ENCODE measurements at regions of chr19 and their contacts with region 1.

Region 1: DNA sequence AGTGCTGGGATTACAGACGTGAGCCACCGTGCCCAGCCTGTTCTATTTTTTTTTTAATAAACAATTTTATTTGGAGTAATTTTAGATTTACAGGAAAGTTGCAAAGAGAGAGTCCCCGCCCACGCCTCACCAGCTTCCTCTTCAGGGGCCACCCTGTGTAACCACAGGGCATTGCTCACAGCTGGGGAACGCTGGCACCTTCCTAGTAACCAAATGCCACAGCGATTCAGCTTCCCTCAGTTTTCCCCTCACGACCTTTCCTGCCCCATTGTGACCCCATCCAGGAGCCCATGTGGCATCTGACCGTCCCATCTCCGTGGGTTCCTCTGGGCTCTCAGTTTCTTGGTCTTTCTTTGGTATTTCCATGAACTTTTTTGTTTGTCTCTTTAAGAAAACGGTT is 83.9 kb downstream of the GNG7 start:
- DNase-seq: peak; percentile 93
- H3K4me3 Mint-ChIP-seq: peak overlapping the region; percentile 38
- H3K27ac Mint-ChIP-seq: peak overlapping the region; percentile 91
- H3K4me1 Mint-ChIP-seq: peaks cover 62% of the 10 kb centered on the region
- H3K27me3 Mint-ChIP-seq: peaks cover 1% of the 10 kb centered on the region

Region 2: GRCh38 chr19:2455851-2456570 is 162.6 kb before region 1 on chr19:
- CTCF ChIA-PET with region 1: interaction called, 6 read pairs
- POLR2A ChIA-PET with region 1: interaction called, 10 read pairs
- intact Hi-C with region 1: no loop called
- DNase-seq: peak; percentile 62
- H3K4me3 Mint-ChIP-seq: peak overlapping the region; percentile 83
- H3K27ac Mint-ChIP-seq: peak overlapping the region; percentile 82
- H3K4me1 Mint-ChIP-seq: peaks cover 18% of the 10 kb centered on the region
- H3K27me3 Mint-ChIP-seq: no peaks in the 10 kb centered on the region

Region 3: DNA sequence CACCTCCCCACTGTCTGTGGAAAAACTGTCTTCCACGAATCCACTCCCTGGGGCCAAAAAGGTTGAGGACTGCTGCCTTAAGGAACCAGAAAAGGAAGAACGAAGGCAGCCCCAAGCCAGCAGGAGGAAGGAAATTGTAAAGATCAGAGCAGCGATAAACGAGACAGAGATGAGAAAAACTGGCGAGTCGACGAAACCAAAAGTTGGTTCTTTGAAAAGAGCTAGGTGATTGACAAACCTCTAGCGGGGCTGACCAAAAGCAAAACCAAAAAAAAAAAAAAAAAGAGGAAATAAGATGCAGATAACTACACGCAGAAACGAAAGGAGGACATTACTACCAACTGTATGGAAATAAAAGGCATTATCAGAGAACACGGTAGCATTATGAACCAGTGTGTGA is 65.8 kb before region 1 on chr19:
- CTCF ChIA-PET with region 1: interaction called, 4 read pairs
- POLR2A ChIA-PET with region 1: interaction called, 11 read pairs
- intact Hi-C with region 1: no loop called
- DNase-seq: peak; percentile 69
- H3K4me3 Mint-ChIP-seq: peak overlapping the region; percentile 59
- H3K27ac Mint-ChIP-seq: peak overlapping the region; percentile 72
- H3K4me1 Mint-ChIP-seq: peaks cover 19% of the 10 kb centered on the region
- H3K27me3 Mint-ChIP-seq: no peaks in the 10 kb centered on the region

Region 4: DNA sequence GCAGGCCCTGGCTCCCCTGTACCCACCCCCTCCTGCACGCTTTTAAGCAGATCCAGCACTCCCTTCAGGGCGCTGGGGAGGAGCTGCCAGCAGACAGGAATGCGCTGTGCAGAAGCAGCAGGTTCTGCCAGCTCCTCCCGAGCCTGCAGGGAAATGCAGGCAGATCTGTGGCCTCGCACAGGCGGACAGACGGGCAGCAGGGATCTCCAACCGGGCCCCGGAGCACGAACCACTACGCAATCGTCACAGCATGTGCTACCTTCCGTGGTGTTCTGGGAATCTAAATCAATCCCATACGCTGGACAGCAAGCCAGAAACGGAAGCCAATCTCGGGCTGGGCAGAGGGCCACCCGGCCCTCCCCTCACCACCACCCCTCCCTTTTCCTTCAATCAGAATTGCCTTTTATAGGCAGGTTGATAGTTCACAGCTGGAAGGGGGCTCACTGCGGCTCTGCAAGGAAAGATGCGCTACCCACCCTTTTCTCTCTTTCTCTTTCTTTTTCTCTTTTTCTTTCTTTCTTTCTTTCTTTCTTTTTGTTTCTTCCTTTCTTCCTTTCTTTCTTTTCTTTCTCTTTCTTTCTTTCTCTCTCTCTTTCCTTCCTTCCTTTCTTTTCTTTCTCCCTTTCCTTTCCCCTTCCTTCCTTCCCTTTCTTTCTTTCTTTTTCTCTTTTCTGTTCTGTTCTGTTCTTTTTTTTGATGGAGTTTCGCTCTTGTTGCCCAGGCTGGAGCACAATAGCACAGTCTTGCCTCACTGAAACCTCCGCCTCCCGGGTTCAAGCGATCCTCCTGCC is 16.0 kb before region 1 on chr19:
- CTCF ChIA-PET with region 1: interaction called, 72 read pairs
- POLR2A ChIA-PET with region 1: interaction called, 12 read pairs
- intact Hi-C with region 1: no loop called
- DNase-seq: no peak
- H3K4me3 Mint-ChIP-seq: no peak overlapping the region
- H3K27ac Mint-ChIP-seq: no peak overlapping the region
- H3K4me1 Mint-ChIP-seq: peaks cover 15% of the 10 kb centered on the region
- H3K27me3 Mint-ChIP-seq: peaks cover 3% of the 10 kb centered on the region

Region 5: GRCh38 chr19:2636897-2637683 is 18.5 kb after region 1 on chr19:
- CTCF ChIA-PET with region 1: interaction called, 29 read pairs
- POLR2A ChIA-PET with region 1: no interaction called
- intact Hi-C with region 1: loop called (anchors 2 kb)
- DNase-seq: peak; percentile 82
- H3K4me3 Mint-ChIP-seq: no peak overlapping the region
- H3K27ac Mint-ChIP-seq: no peak overlapping the region
- H3K4me1 Mint-ChIP-seq: peaks cover 5% of the 10 kb centered on the region
- H3K27me3 Mint-ChIP-seq: no peaks in the 10 kb centered on the region

Region 6: DNA sequence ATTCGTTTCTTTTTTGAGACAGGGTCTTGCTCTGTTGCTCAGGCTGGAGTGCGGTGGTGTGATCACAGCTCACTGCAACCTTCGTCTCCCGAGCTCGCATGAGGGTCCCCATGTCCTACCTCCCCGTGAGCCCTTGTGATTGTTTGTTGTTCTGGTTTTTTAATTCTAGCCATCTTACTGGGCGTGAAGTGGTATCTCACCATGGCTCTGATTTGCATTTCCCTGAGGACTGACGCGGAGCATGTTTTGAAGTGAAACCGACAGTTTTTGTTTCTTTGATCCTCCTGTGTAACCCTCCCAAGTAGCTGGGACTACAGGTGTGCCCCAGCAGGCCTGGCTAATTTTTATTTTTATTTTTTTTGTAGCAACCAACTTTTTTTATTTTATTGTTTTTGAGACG is 62.2 kb after region 1 on chr19:
- CTCF ChIA-PET with region 1: no interaction called
- POLR2A ChIA-PET with region 1: no interaction called
- intact Hi-C with region 1: no loop called
- DNase-seq: no peak
- H3K4me3 Mint-ChIP-seq: no peak overlapping the region
- H3K27ac Mint-ChIP-seq: no peak overlapping the region
- H3K4me1 Mint-ChIP-seq: no peaks in the 10 kb centered on the region
- H3K27me3 Mint-ChIP-seq: no peaks in the 10 kb centered on the region

Measured in activated CD4-positive, alpha-beta memory T cell treated with anti-CD3 and anti-CD28 coated beads for 36 hours (primary cell).